Calu3 (cell line): ENCODE measurements at regions of chr16 and their contacts with region 1.

Region 1: GRCh38 chr16:27240948-27241561 is 27.5 kb downstream of the NSMCE1 start:
- DNase-seq: no peak
- H3K4me3 Mint-ChIP-seq: no peak overlapping the region
- H3K27ac Mint-ChIP-seq: no peak overlapping the region
- H3K4me1 Mint-ChIP-seq: peaks cover 25% of the 10 kb centered on the region
- H3K27me3 Mint-ChIP-seq: no peaks in the 10 kb centered on the region
- CTCF ChIP-seq: no peak

Region 2: GRCh38 chr16:27217256-27217655 is 23.8 kb before region 1 on chr16:
- CTCF ChIA-PET with region 1: interaction called, 10 read pairs
- intact Hi-C with region 1: no loop called
- DNase-seq: no peak
- H3K4me3 Mint-ChIP-seq: no peak overlapping the region
- H3K27ac Mint-ChIP-seq: no peak overlapping the region
- H3K4me1 Mint-ChIP-seq: peaks cover 7% of the 10 kb centered on the region
- H3K27me3 Mint-ChIP-seq: no peaks in the 10 kb centered on the region
- CTCF ChIP-seq: no peak